ENCODE measurements at regions of chr5 and their contacts with region 1.

Region 1: DNA sequence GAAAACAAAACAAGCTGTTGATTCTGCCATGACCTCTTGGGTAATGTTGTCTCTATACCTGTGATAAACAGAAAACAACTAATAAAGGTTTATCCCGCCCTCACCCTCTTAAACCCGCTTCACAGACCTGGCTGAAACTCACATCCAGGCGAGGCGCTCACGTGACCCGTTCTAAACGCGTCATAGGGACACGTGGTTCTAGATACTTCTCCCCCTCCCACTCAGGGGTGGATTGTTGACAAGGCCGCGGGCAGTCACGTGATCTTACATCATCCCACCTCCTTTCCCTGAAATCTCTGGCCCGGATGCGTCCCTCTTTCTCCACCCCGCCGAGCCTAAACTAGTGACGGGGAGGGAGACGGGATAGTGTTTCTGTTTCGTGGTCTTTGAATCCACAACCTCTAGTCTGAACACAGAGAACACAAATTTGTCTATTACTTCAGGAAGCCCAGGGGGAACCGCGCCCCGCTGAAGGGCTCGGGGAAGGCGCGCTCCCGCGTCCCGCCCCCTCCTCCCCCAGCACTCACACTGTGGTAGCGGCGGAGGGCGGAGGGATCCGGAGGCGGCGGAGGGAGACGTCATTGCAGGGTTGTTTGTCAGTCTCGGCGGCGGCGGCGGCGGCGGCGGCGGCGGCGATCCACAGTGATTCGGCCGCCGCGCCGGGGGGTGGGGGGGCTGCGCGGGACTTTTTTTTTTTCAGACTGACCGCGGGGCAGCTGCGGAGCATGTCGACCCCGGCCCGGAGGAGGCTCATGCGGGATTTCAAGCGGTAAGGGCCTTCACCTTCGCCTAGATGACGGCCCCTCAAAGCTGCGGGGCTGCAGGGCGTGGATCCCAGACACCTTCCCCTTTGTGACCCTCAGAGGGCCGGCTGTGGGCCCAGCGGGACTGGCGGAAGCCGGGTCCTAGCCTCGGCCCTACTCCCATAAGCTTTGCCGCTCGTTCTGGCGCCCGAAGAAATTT is at the start of gene UBE2B:
- DNase-seq: peak; percentile 99 to 100
- H3K4me3 ChIP-seq: peak within 1 kb of the TSS; percentile 76 to 81
- H3K27ac ChIP-seq: peak within 1 kb of the TSS; percentile 99
- H3K4me1 ChIP-seq: peaks cover 38% of the 10 kb centered on the region
- H3K27me3 ChIP-seq: no peaks in the 10 kb centered on the region
- CTCF ChIP-seq: peak in 1 of 3 experiments; percentile 17
- POLR2A ChIP-seq: peak in 1 of 2 donors; percentile 82
- total RNA-seq, gene UBE2B: 68.3 TPM

Region 2: DNA sequence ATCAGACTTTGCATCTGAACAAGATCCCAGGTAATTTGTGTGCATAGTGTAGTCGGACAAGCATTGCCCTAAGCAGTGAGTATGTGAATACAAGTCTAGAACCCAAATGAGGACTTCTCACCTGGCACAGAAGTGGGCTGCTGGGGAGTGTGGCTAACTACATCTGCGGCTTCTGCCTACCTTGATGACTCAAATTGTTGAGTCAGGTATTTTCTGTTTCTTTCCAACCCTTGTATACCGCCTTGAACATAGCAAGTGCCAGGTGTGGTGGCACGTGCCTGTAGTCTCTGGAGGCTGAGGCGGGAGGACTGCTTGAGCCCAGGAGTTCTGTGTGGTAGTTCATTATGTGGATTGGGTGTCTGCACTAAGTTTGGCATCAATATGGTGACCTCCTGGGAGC is 146.4 kb after region 1 on chr5:
- intact Hi-C with region 1: loop called (anchors 1 kb)
- DNase-seq: no peak
- H3K4me3 ChIP-seq: no peak overlapping the region
- H3K27ac ChIP-seq: no peak overlapping the region
- H3K4me1 ChIP-seq: peaks cover under 1% of the 10 kb centered on the region
- H3K27me3 ChIP-seq: no peaks in the 10 kb centered on the region
- CTCF ChIP-seq: no peak
- POLR2A ChIP-seq: no peak

Measured in vagina (tissue), 2 donors.